ENCODE measurements at regions of chr9 and their contacts with region 1.

Region 1: GRCh38 chr9:121321016-121321503 is 49.0 kb downstream of the STOM start:
- DNase-seq: no peak
- ATAC-seq: no peak
- H3K4me3 ChIP-seq: no peak overlapping the region
- H3K4me3 Mint-ChIP-seq: no peak overlapping the region
- H3K27ac ChIP-seq: no peak overlapping the region
- H3K27ac Mint-ChIP-seq: no peak overlapping the region
- H3K4me1 ChIP-seq: no peaks in the 10 kb centered on the region
- H3K4me1 Mint-ChIP-seq: no peaks in the 10 kb centered on the region
- H3K27me3 ChIP-seq: no peaks in the 10 kb centered on the region
- H3K27me3 Mint-ChIP-seq: no peaks in the 10 kb centered on the region
- CTCF ChIP-seq: no peak

Region 2: DNA sequence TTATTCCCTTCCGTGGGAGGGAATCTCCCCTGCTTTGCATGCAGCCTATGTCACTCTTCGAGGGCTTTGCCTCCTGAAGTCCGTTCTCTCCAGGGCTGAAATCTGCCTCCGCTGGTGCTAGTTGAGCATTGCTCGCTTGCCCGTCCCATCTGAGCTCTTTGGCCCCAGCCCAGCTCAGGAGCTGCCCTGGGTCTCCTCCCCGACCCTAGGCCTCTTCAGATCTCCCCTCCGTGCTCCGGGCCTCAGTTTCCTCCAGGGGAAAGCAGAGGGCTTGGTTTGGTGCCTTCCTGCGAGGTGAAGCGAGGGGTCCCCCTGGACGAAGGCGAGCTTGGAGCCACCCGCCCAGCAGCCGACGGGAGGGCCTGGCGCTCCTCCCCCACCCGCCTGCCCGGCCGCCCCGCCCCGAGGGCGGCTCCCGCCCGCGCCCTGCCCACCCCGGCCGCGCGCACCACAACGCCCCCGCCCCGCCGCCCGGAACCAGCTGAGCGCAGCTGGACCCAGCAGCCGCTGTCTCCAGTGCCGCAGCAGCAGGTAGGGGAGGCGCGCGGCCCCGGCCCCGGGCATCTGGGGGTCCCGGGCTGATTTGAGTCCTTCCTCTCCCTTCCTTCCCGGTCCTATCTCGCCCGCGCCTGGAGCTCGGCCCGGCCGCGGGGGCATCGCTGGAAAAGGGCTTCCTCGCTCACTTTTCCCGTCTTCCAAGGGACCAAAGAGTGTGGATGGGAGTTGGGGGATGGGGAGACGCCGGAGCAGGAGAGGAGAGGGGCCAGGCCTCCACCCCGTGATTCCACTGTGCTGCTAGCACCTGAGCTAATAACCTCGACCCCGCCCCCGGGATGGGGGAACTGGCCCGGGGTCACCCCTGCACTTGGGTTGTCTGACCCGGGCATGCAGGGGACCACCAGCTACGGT is 53.1 kb before region 1 on chr9 and contains the start of gene GSN:
- CTCF ChIA-PET with region 1: interaction called, 13 read pairs
- POLR2A ChIA-PET with region 1: no interaction called
- intact Hi-C with region 1: no loop called
- DNase-seq: peak; percentile 61
- ATAC-seq: peak; percentile 91
- H3K4me3 ChIP-seq: peak within 1 kb of the TSS; percentile 62 to 78 (median 74)
- H3K4me3 Mint-ChIP-seq: peak within 1 kb of the TSS; percentile 91
- H3K27ac ChIP-seq: no peak within 1 kb of the TSS
- H3K27ac Mint-ChIP-seq: peak within 1 kb of the TSS; percentile 68
- H3K4me1 ChIP-seq: peaks cover 13 to 41% of the 10 kb centered on the region in 2 donors
- H3K4me1 Mint-ChIP-seq: peaks cover 32% of the 10 kb centered on the region
- H3K27me3 ChIP-seq: no peaks in the 10 kb centered on the region
- H3K27me3 Mint-ChIP-seq: no peaks in the 10 kb centered on the region
- CTCF ChIP-seq: no peak
- total RNA-seq, gene GSN: 45.4 and 45.9 TPM in 2 replicates

Region 3: DNA sequence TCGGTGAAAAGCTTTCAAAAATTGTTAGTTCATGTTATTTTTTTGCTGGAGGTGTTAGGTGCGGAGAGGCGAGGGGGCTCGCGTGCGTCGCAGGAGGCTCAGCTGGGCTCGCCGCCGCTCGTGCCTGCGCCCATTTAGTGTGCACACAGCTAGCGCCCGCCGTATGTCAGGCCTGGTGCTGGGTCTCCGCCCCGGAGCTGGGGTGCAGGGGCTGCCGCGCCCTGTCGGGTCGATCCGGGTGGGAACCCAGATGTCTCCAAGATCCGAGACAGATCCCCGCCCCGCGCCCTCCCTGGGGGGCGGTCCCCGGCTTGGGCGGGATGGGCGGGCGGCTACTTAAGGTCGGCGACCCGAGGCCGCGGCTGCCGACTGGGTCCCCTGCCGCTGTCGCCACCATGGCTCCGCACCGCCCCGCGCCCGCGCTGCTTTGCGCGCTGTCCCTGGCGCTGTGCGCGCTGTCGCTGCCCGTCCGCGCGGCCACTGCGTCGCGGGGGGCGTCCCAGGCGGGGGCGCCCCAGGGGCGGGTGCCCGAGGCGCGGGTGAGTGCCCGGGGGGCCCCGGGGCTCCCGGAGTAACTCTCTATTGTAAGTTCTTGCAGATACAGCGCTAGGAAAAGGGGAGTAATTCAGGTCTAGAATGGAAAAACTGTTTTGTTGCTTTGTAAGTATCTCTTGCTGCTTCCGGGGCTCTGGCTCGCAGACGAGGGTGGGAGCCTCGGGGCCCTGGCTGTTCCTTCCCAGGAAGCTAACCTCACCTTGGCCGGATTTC is 21.4 kb before region 1 on chr9:
- CTCF ChIA-PET with region 1: interaction called, 27 read pairs
- POLR2A ChIA-PET with region 1: no interaction called
- intact Hi-C with region 1: no loop called
- DNase-seq: peak; percentile 57
- ATAC-seq: peak; percentile 55
- H3K4me3 ChIP-seq: peak overlapping the region; percentile 17 to 61 (median 53)
- H3K4me3 Mint-ChIP-seq: peak overlapping the region; percentile 86
- H3K27ac ChIP-seq: peak overlapping the region; percentile 51 to 64
- H3K27ac Mint-ChIP-seq: peak overlapping the region; percentile 83
- H3K4me1 ChIP-seq: peaks cover 20 to 38% of the 10 kb centered on the region in 2 donors
- H3K4me1 Mint-ChIP-seq: peaks cover 25% of the 10 kb centered on the region
- H3K27me3 ChIP-seq: peaks cover 0 to 5% (median 2%) of the 10 kb centered on the region in 4 experiments
- H3K27me3 Mint-ChIP-seq: peaks cover 4% of the 10 kb centered on the region
- CTCF ChIP-seq: no peak

Region 4: DNA sequence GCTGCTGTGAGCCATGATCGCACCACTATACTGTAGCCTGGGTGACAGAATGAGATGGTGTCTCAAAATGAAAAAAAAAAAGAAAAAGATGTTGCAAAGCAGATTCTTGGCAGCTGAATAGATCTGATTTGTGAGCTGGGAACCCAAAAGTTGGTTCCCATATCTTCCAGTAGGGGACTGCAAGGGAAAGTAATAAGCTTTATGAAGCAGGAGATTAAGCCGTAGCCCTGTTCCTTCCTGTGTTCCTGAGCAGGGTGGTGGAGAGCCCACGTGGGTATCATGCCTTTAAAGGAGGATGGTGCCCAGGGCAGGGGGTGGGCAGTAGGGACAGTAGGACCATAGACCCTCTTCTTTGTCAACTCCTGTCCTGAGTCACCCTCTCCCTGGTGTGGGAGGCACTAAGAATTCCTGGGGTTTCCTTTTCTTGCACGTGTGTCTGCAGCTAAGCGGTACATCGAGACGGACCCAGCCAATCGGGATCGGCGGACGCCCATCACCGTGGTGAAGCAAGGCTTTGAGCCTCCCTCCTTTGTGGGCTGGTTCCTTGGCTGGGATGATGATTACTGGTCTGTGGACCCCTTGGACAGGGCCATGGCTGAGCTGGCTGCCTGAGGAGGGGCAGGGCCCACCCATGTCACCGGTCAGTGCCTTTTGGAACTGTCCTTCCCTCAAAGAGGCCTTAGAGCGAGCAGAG is 11.1 kb after region 1 on chr9:
- CTCF ChIA-PET with region 1: interaction called, 27 read pairs
- POLR2A ChIA-PET with region 1: no interaction called
- intact Hi-C with region 1: no loop called
- DNase-seq: no peak
- ATAC-seq: no peak
- H3K4me3 ChIP-seq: no peak overlapping the region
- H3K4me3 Mint-ChIP-seq: no peak overlapping the region
- H3K27ac ChIP-seq: no peak overlapping the region
- H3K27ac Mint-ChIP-seq: no peak overlapping the region
- H3K4me1 ChIP-seq: peaks cover 3 to 8% of the 10 kb centered on the region in 2 donors
- H3K4me1 Mint-ChIP-seq: peaks cover 8% of the 10 kb centered on the region
- H3K27me3 ChIP-seq: no peaks in the 10 kb centered on the region
- H3K27me3 Mint-ChIP-seq: no peaks in the 10 kb centered on the region
- CTCF ChIP-seq: no peak

Region 5: DNA sequence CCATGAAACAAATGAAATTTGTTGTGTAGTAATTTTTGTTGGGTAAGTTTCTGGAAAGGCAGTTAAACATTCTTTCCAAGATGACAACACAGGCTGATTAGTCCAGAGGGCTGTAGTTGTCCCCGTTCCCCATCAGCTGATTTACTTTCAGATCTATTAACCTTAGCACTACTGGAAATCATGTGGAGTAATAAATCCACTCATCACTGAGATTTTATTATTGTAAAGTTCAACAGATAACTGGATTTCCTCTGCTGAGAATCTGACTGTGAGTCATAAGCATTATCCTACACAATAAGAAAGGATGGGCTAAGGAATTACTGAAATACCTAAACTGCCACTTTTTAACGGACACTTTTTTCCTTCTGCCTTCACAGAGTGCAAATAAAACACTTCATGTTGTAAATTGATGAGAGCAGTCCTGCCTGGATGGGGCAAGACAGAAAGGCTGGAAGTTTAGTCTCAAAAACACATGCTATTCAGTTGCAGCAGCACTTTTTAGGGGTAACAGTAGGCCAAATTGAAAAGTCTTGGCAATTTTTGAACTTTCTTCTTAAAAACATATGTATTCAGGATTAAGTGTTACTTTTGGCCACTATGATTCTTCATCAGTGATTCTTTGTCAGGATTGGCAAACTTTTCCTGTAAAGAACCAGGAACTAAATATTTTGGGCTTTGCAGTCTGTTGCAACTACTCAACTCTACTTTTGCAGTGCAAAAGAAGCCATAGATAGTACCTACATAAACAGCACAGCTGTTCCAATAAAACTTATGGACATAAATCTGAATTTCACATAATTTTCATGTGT is 42.0 kb after region 1 on chr9:
- CTCF ChIA-PET with region 1: interaction called, 23 read pairs
- POLR2A ChIA-PET with region 1: no interaction called
- intact Hi-C with region 1: loop called (anchors 5 kb)
- DNase-seq: no peak
- ATAC-seq: no peak
- H3K4me3 ChIP-seq: no peak overlapping the region
- H3K4me3 Mint-ChIP-seq: no peak overlapping the region
- H3K27ac ChIP-seq: no peak overlapping the region
- H3K27ac Mint-ChIP-seq: no peak overlapping the region
- H3K4me1 ChIP-seq: peaks cover 3 to 15% of the 10 kb centered on the region in 2 donors
- H3K4me1 Mint-ChIP-seq: peaks cover 21% of the 10 kb centered on the region
- H3K27me3 ChIP-seq: no peaks in the 10 kb centered on the region
- H3K27me3 Mint-ChIP-seq: no peaks in the 10 kb centered on the region
- CTCF ChIP-seq: no peak

Region 6: GRCh38 chr9:121393318-121393717 is 72.3 kb after region 1 on chr9:
- CTCF ChIA-PET with region 1: interaction called, 371 read pairs
- POLR2A ChIA-PET with region 1: no interaction called
- intact Hi-C with region 1: no loop called
- DNase-seq: no peak
- ATAC-seq: no peak
- H3K4me3 ChIP-seq: no peak overlapping the region
- H3K4me3 Mint-ChIP-seq: no peak overlapping the region
- H3K27ac ChIP-seq: no peak overlapping the region
- H3K27ac Mint-ChIP-seq: no peak overlapping the region
- H3K4me1 ChIP-seq: no peaks in the 10 kb centered on the region
- H3K4me1 Mint-ChIP-seq: no peaks in the 10 kb centered on the region
- H3K27me3 ChIP-seq: no peaks in the 10 kb centered on the region
- H3K27me3 Mint-ChIP-seq: no peaks in the 10 kb centered on the region
- CTCF ChIP-seq: no peak

Region 7: DNA sequence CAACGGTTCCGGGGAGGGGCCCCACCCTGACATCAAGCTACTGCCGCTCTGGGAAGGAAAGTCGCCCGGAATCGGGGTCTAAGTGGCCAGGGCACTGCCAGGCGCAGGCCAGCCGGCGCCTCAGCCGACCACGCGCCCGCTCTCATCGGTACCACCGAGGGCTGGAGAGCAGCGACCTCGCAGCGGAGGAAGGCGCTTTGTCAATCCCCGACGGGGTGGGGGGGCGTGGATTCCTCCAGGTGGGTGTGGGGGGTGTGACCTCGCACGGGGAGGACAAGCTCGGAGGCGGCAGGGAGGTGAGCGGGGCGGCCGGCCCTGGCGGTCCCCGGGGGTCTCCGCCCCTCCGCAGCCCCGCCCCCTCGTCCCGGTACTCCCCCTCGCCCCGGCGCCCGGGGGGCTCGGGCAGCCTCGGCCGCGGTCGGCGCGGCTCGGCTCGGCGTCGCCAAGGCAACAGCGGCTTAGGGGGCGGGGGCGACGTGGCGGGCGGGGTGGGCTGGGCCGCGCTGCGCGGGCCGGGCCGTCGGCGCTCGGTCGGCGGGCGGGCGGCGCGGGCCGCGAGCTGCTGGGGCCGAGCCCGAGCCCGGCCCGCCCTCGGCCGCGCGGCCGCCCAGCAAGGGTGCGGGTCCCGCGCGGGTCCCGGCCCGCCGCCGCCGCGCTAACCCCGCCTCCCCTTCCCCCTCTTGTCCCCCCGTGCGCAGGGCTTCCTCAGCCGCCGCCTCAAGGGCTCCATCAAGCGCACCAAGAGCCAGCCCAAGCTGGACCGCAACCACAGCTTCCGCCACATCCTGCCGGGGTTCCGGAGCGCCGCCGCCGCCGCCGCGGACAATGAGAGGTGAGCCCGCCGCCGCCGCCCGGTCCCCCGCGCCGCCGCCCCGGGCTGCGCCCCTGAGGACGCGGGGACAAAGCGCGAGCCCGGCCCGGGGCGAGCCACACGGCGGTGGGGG is 377.8 kb after region 1 on chr9:
- CTCF ChIA-PET with region 1: no interaction called
- POLR2A ChIA-PET with region 1: no interaction called
- intact Hi-C with region 1: no loop called
- DNase-seq: peak; percentile 63
- ATAC-seq: peak; percentile 67
- H3K4me3 ChIP-seq: peak overlapping the region in 3 of 5 experiments; percentile 12 to 56 (median 52)
- H3K4me3 Mint-ChIP-seq: peak overlapping the region; percentile 71
- H3K27ac ChIP-seq: no peak overlapping the region
- H3K27ac Mint-ChIP-seq: peak overlapping the region; percentile 41
- H3K4me1 ChIP-seq: peaks cover 27 to 31% of the 10 kb centered on the region in 2 donors
- H3K4me1 Mint-ChIP-seq: peaks cover 29% of the 10 kb centered on the region
- H3K27me3 ChIP-seq: peaks cover 0 to 38% (median 25%) of the 10 kb centered on the region in 4 experiments
- H3K27me3 Mint-ChIP-seq: peaks cover 20% of the 10 kb centered on the region
- CTCF ChIP-seq: no peak